Activated CD4-positive, alpha-beta memory T cell treated with anti-CD3 and anti-CD28 coated beads, Interleukin-2, amount 10 ng/mL, durations not matched to agents 7 days and 5 days (primary cell): ENCODE measurements at regions of chr1 and their contacts with region 1.

Region 1: DNA sequence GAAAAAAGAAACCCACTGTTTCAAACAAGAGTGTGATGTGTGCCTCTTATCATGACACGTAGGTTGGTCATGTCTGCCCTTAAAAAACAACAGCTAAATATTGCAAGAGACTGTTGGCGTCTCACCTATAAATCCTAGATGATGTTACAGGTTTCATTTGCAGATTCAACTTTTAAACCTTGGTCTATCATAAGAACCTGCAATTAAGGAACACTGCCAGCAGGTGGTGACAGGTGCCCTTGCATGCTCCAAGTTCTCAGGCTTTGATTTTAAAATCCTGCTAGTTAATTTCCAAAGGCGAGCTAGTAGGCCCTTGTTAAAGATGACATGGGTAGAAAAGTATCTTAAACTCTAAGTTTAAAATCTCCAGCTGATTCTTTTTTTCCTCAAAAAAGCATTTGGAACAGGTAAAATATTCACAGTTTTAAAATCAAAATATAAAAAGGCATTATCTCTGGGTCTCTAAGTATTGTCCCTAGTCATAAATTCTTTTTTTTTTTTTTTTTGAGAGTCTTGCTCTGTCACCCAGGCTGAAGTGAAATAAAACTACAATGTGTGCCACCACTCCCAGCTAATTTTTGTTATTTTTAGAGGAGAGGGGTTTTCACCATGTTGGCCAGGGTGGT is 39.1 kb downstream of the CLSTN1 start:
- DNase-seq: peak; percentile 68
- H3K4me3 Mint-ChIP-seq: no peak overlapping the region
- H3K27ac Mint-ChIP-seq: no peak overlapping the region
- H3K4me1 Mint-ChIP-seq: peaks cover 54% of the 10 kb centered on the region
- H3K27me3 Mint-ChIP-seq: no peaks in the 10 kb centered on the region

Region 2: GRCh38 chr1:9537863-9538668 is 246.6 kb before region 1 on chr1:
- CTCF ChIA-PET with region 1: no interaction called
- POLR2A ChIA-PET with region 1: no interaction called
- DNase-seq: no peak
- H3K4me3 Mint-ChIP-seq: peak overlapping the region; percentile 1
- H3K27ac Mint-ChIP-seq: no peak overlapping the region
- H3K4me1 Mint-ChIP-seq: peaks cover 37% of the 10 kb centered on the region
- H3K27me3 Mint-ChIP-seq: no peaks in the 10 kb centered on the region

Region 3: DNA sequence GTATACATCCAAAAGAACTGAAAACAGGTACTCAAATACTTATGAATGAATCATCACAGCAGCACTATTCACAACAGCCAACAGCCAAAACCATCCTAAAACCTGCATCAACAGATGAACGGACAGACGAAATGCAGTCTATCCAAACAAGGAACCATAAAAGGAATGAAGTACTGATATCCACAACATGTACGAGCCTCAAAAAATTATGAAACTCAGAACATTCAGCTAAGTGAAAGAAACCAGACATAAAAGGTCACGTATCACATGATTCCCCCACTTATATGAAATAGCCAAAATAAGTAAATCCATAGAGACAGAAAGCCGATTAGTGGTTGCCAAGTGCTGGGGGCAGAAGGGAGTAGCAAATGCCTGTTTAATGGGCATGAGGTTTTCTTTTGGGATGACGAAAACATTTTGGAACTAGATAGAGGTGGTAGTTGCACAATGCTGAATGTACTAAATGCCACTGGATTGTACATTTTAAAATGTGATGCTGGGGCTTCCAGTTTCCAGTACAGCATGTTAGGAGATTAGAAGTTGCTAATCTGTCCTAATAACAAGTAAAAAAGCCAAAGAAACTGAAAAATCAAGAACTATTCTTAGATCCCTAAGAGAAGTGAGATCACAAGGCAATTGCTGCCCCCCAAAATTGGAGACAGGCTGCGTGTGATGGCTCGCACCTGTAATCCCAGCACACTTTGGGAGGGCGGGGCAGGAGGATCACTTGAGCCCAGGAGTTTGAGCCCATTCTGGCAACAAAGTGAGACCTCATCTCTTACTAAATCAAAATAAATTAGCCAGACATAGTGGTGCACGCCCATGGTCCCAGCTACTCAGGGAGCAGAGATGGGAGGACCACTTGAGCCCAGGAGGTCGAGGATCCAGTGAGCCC is 13.9 kb after region 1 on chr1:
- CTCF ChIA-PET with region 1: interaction called, 32 read pairs
- POLR2A ChIA-PET with region 1: interaction called, 12 read pairs
- DNase-seq: no peak
- H3K4me3 Mint-ChIP-seq: peak overlapping the region; percentile 24
- H3K27ac Mint-ChIP-seq: peak overlapping the region; percentile 85
- H3K4me1 Mint-ChIP-seq: peaks cover 48% of the 10 kb centered on the region
- H3K27me3 Mint-ChIP-seq: no peaks in the 10 kb centered on the region

Region 4: DNA sequence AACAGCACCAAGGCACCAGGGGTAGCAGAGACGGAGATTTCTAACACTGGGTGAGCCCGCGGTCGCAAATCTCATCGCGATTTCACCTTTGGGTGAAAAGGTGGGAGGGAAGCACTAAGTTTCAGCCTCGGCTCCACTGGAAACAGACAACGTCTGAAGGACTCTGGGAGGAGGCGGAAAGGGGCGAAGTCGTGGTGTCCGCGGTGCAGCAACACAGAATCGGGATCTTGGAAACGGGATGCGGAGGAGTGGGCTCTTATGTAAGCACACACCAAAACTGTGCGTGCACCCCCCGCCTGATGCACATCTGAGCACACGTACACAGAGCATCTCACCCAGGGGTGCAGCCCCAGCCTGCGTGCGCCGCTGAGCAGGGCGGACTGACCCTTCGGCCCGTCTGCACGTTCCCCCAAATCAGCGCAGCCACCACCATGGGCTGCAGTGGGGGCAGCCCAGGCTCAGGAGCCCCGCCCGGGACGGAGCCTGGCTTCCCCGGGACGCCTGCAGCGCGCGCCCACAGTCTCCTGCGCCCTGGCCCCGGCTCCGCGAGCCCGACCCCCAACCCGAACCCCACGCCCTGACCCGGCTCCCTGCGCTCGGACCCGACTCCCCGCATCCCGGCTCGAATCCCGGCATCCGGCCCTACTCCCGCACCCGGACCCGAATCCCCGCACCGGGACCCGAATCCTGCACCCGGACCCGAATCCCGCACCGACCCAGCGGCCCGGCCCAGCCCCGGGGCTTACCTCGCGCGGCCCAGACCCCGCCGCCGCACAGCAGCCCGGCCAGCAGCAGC is 38.5 kb after region 1 on chr1:
- CTCF ChIA-PET with region 1: interaction called, 30 read pairs
- POLR2A ChIA-PET with region 1: interaction called, 5 read pairs
- DNase-seq: peak; percentile 42
- H3K4me3 Mint-ChIP-seq: peak overlapping the region; percentile 91
- H3K27ac Mint-ChIP-seq: peak overlapping the region; percentile 74
- H3K4me1 Mint-ChIP-seq: peaks cover 50% of the 10 kb centered on the region
- H3K27me3 Mint-ChIP-seq: peaks cover 6% of the 10 kb centered on the region

Region 5: GRCh38 chr1:9861360-9861759 is 76.7 kb after region 1 on chr1:
- CTCF ChIA-PET with region 1: interaction called, 42 read pairs
- POLR2A ChIA-PET with region 1: interaction called, 4 read pairs
- DNase-seq: no peak
- H3K4me3 Mint-ChIP-seq: no peak overlapping the region
- H3K27ac Mint-ChIP-seq: no peak overlapping the region
- H3K4me1 Mint-ChIP-seq: peaks cover 15% of the 10 kb centered on the region
- H3K27me3 Mint-ChIP-seq: no peaks in the 10 kb centered on the region

Region 6: GRCh38 chr1:9867408-9868243 is 83.0 kb after region 1 on chr1:
- CTCF ChIA-PET with region 1: interaction called, 141 read pairs
- POLR2A ChIA-PET with region 1: interaction called, 6 read pairs
- DNase-seq: peak; percentile 90
- H3K4me3 Mint-ChIP-seq: no peak overlapping the region
- H3K27ac Mint-ChIP-seq: no peak overlapping the region
- H3K4me1 Mint-ChIP-seq: no peaks in the 10 kb centered on the region
- H3K27me3 Mint-ChIP-seq: no peaks in the 10 kb centered on the region